CD4-positive, alpha-beta T cell (primary cell): ENCODE measurements at regions of chr19 and their contacts with region 1.

Region 1: GRCh38 chr19:17859533-17860330 is at the start of gene RPL18A:
- DNase-seq: peak; percentile 96 to 100 (median 99)
- ATAC-seq: peak; percentile 95
- H3K4me3 ChIP-seq: peak within 1 kb of the TSS; percentile 86
- H3K4me3 Mint-ChIP-seq: peak within 1 kb of the TSS; percentile 100
- H3K27ac ChIP-seq: peak within 1 kb of the TSS; percentile 1 to 71
- H3K27ac Mint-ChIP-seq: peak within 1 kb of the TSS; percentile 88
- H3K4me1 ChIP-seq: peaks cover 37% of the 10 kb centered on the region
- H3K4me1 Mint-ChIP-seq: peaks cover 33% of the 10 kb centered on the region
- H3K27me3 ChIP-seq: no peaks in the 10 kb centered on the region
- H3K27me3 Mint-ChIP-seq: no peaks in the 10 kb centered on the region
- CTCF ChIP-seq: peak; percentile 82
- total RNA-seq, gene RPL18A: 4,157 to 4,260 TPM

Region 2: GRCh38 chr19:17448131-17448967 is 411.4 kb before region 1 on chr19 and contains the start of gene TMEM221:
- CTCF ChIA-PET with region 1: no interaction called
- POLR2A ChIA-PET with region 1: no interaction called
- intact Hi-C with region 1: loop called in 1 of 2 experiments (anchors 10 kb)
- DNase-seq: peak in 13 of 14 experiments; percentile 26 to 82 (median 55)
- ATAC-seq: peak; percentile 88
- H3K4me3 ChIP-seq: peak within 1 kb of the TSS; percentile 31
- H3K4me3 Mint-ChIP-seq: peak within 1 kb of the TSS; percentile 1
- H3K27ac ChIP-seq: no peak within 1 kb of the TSS
- H3K27ac Mint-ChIP-seq: no peak within 1 kb of the TSS
- H3K4me1 ChIP-seq: peaks cover 17% of the 10 kb centered on the region
- H3K4me1 Mint-ChIP-seq: peaks cover 10% of the 10 kb centered on the region
- H3K27me3 ChIP-seq: peaks cover 0 to 6% of the 10 kb centered on the region in 2 experiments
- H3K27me3 Mint-ChIP-seq: peaks cover 37% of the 10 kb centered on the region
- CTCF ChIP-seq: peak; percentile 56
- total RNA-seq, gene TMEM221: not detected

Region 3: DNA sequence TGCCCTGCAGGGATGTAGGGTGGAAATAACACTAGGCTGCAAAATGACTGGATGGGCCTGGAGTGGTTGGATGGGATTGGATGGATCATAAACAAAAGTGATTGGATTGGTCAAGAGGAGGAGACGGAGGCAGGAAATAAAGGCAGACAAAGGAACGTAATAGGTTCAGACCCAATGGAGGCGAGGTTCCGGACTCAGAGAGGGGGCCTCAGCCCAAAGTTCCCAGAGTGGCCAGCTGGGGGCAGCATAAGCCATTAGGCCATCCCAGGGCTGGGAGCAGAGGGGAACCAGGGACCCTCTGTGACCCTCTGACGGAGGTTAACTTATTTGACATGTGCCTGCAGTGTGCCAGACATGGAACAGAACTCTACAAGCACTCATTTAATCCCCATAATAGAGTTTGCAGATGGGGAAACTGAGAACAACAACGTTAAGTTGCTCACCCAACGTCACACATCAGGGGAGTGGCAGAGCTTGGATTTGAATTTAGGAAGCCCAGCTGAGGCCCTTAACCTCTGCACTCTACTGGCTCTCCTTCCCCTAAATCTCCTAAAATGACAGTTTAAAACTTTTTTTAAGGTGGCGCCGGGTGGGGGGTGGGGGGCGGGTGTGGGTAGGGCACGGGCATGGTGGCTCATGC is 155.8 kb before region 1 on chr19:
- CTCF ChIA-PET with region 1: interaction called, 27 read pairs
- POLR2A ChIA-PET with region 1: interaction called, 6 read pairs
- intact Hi-C with region 1: loop called (anchors 1 kb)
- DNase-seq: peak; percentile 63 to 80 (median 66)
- ATAC-seq: peak; percentile 99
- H3K4me3 ChIP-seq: no peak overlapping the region
- H3K4me3 Mint-ChIP-seq: no peak overlapping the region
- H3K27ac ChIP-seq: no peak overlapping the region
- H3K27ac Mint-ChIP-seq: no peak overlapping the region
- H3K4me1 ChIP-seq: peaks cover 4% of the 10 kb centered on the region
- H3K4me1 Mint-ChIP-seq: peaks cover 4% of the 10 kb centered on the region
- H3K27me3 ChIP-seq: peaks cover 2 to 4% of the 10 kb centered on the region in 2 experiments
- H3K27me3 Mint-ChIP-seq: peaks cover 6% of the 10 kb centered on the region
- CTCF ChIP-seq: peak; percentile 93

Region 4: DNA sequence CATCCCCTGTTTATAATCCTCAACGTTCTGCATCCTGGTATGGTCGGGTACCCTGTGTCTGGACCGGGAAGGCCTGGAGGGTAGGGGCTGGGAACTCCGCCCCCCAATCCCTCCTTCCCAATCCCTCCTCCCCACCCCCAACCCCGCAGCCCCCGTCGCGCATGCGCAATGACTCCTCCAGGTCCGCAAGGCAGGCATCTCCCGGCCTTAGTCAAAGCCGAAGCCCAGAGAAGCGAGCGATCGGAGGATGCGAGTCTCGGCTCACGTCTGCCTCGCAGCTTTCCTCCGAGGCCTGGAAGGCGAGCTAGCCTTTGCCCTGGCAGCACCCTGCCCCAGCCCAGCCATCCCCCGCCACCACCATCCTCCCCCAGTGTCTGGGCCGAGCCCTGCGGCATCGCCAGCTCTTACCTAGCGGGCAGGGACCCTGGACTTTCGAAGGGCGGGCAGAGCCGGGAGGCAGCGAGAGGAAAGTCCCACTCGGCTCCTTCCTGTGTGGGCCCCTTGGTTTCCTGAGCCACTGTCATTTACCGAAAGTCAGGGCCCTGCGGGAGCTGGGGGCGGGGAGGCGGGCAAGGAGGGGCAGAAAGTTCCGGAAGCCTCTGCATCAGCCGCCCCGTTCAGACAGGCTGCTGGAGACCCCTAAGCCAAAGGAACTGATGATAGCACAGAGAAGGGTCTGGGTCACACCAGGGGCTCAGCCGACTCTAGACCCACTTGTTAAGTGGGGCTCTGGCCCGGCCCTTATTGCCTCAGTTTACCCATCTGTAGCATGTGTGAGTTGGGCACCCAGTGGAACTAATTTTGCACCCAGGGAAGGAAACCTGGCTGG is 12.0 kb before region 1 on chr19 and contains the start of gene JAK3:
- CTCF ChIA-PET with region 1: interaction called, 37 read pairs
- POLR2A ChIA-PET with region 1: interaction called, 75 read pairs
- intact Hi-C with region 1: no loop called
- DNase-seq: peak; percentile 67 to 93 (median 83)
- ATAC-seq: peak; percentile 81
- H3K4me3 ChIP-seq: peak within 1 kb of the TSS; percentile 65
- H3K4me3 Mint-ChIP-seq: peak within 1 kb of the TSS; percentile 99
- H3K27ac ChIP-seq: peak within 1 kb of the TSS; percentile 90 to 98
- H3K27ac Mint-ChIP-seq: peak within 1 kb of the TSS; percentile 94
- H3K4me1 ChIP-seq: peaks cover 85% of the 10 kb centered on the region
- H3K4me1 Mint-ChIP-seq: peaks cover 72% of the 10 kb centered on the region
- H3K27me3 ChIP-seq: no peaks in the 10 kb centered on the region
- H3K27me3 Mint-ChIP-seq: no peaks in the 10 kb centered on the region
- CTCF ChIP-seq: no peak
- total RNA-seq, gene JAK3: 120 to 121 TPM

Region 5: DNA sequence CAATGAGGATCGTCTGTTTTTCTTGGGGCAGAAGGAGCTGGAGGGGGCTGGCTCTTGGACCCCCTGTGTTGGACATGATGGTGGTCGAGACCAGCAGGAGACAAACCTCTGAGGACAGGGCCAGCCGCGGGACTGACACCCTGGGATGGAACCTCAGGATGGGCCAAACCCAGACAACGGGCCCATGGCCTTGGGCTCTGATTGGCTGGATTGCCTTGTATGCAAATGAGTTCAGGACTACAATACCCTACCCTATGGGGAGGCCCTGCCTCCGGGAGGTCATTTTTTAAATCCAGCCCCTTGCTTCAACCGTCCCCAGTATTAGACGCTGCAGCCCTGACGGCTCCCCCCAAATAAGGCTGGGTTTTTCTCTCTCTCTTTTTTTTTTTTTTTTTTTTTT is 34.0 kb after region 1 on chr19:
- CTCF ChIA-PET with region 1: no interaction called
- POLR2A ChIA-PET with region 1: no interaction called
- intact Hi-C with region 1: no loop called
- DNase-seq: no peak
- ATAC-seq: no peak
- H3K4me3 ChIP-seq: no peak overlapping the region
- H3K4me3 Mint-ChIP-seq: no peak overlapping the region
- H3K27ac ChIP-seq: no peak overlapping the region
- H3K27ac Mint-ChIP-seq: no peak overlapping the region
- H3K4me1 ChIP-seq: no peaks in the 10 kb centered on the region
- H3K4me1 Mint-ChIP-seq: no peaks in the 10 kb centered on the region
- H3K27me3 ChIP-seq: no peaks in the 10 kb centered on the region
- H3K27me3 Mint-ChIP-seq: peaks cover 4% of the 10 kb centered on the region
- CTCF ChIP-seq: no peak

Region 6: DNA sequence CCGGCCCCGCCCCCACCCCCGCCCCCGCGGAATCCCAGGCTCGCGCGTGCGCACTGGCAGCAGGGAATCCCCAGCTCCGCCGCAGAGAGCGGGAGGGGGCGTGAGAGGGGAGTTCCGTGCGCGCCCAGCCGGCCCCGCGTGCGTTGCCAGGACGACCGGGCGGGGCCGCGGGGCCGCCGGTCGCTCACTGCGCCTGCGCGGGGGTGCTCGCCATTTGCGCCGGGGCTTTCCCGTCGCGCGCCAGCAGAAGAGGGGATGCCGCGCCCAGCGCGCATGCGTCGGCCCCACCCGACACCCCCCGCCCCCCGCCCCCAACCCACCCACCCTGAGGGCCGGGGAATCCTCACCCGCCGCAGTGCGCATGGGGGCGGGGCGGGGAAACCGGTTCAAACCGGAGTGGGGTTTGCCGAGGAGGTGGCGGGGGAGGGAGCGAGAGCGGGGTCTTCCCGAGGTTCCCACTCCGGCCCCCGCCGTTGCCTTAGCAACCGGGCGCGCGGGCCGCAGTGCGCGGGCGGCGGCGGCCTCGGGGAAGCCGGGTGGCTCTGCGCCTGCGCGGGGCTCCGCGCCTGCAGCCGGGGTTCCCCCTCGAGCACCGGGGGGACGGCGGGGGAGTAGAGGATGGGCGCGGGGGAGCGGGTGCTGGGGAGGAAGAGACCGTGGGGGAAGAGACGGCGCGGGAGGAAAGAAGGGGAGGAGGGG is 88.2 kb after region 1 on chr19:
- CTCF ChIA-PET with region 1: interaction called, 5 read pairs
- POLR2A ChIA-PET with region 1: interaction called, 12 read pairs
- intact Hi-C with region 1: no loop called
- DNase-seq: peak; percentile 89 to 99 (median 94)
- ATAC-seq: peak; percentile 69
- H3K4me3 ChIP-seq: peak overlapping the region; percentile 57
- H3K4me3 Mint-ChIP-seq: peak overlapping the region; percentile 89
- H3K27ac ChIP-seq: no peak overlapping the region
- H3K27ac Mint-ChIP-seq: peak overlapping the region; percentile 93
- H3K4me1 ChIP-seq: peaks cover 58% of the 10 kb centered on the region
- H3K4me1 Mint-ChIP-seq: peaks cover 55% of the 10 kb centered on the region
- H3K27me3 ChIP-seq: peaks cover 36 to 46% of the 10 kb centered on the region in 2 experiments
- H3K27me3 Mint-ChIP-seq: peaks cover 44% of the 10 kb centered on the region
- CTCF ChIP-seq: no peak

Region 7: DNA sequence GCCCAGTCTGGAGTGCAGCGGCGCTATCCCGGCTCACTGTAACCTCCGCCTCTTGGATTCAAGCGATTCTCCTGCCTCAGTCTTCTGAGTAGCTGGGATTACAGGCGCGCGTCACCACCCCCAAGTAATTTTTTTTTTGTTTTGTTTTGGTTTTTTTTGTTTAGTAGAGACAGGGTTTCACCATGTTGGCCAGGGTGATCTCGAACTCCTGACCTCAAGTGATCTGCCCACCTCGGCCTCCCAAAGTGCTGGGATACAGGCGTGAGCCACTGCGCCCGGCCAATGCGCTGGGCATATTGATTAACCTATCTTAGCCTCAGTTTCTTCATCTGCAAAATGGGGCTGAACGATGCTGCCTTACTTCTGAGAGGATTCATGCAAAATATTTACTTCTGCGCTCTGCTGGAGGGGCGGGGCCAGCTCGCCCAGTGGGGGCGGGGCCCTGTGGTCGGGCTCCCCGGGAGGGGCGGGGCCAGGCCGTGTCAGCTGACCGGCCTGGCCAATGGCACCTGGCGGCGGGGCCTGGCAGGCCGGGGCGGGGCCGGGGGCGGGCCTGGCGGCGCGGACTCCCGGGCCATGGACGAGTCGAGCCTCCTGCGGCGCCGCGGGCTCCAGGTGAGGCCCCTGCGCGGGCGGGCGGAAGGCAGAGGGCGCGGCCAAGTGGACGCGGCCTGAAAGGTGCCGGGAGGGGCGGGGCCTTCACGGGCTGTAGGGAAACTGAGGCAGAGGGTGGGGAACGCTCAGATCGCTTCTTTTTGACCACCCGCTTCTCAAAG is 237.7 kb after region 1 on chr19 and contains the start of gene MAST3:
- CTCF ChIA-PET with region 1: no interaction called
- POLR2A ChIA-PET with region 1: no interaction called
- intact Hi-C with region 1: no loop called
- DNase-seq: peak; percentile 81 to 96 (median 93)
- ATAC-seq: peak; percentile 98
- H3K4me3 ChIP-seq: peak within 1 kb of the TSS; percentile 59
- H3K4me3 Mint-ChIP-seq: peak within 1 kb of the TSS; percentile 91
- H3K27ac ChIP-seq: peak within 1 kb of the TSS in 1 of 2 donors; percentile 53
- H3K27ac Mint-ChIP-seq: peak within 1 kb of the TSS; percentile 67
- H3K4me1 ChIP-seq: peaks cover 35% of the 10 kb centered on the region
- H3K4me1 Mint-ChIP-seq: peaks cover 32% of the 10 kb centered on the region
- H3K27me3 ChIP-seq: no peaks in the 10 kb centered on the region
- H3K27me3 Mint-ChIP-seq: no peaks in the 10 kb centered on the region
- CTCF ChIP-seq: no peak
- total RNA-seq, gene MAST3: 16.1 to 16.4 TPM

Region 8: DNA sequence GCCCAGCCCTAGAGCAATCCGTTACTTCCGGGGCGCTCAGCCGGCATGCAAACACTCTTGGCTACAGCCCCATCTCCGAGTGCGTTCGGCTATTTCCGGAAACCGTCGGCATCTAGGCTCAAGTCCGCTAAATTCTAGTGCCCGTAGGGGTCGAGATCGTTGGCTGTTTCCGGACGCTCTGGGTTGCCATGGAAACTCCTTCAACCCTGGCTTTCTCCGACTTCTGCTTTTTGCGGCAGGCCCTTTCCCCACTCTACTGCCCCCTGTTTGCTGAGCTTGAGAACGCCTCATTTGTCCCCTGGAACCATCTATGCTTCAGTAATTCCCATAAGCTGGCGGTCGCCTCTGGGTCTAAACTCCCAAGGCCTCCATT is 292.7 kb after region 1 on chr19:
- CTCF ChIA-PET with region 1: no interaction called
- POLR2A ChIA-PET with region 1: interaction called, 6 read pairs
- intact Hi-C with region 1: loop called in 1 of 2 experiments (anchors 1 kb)
- DNase-seq: peak; percentile 94 to 99 (median 98)
- ATAC-seq: peak; percentile 67
- H3K4me3 ChIP-seq: peak overlapping the region; percentile 78
- H3K4me3 Mint-ChIP-seq: peak overlapping the region; percentile 86
- H3K27ac ChIP-seq: peak overlapping the region; percentile 64 to 88
- H3K27ac Mint-ChIP-seq: peak overlapping the region; percentile 80
- H3K4me1 ChIP-seq: peaks cover 36% of the 10 kb centered on the region
- H3K4me1 Mint-ChIP-seq: peaks cover 23% of the 10 kb centered on the region
- H3K27me3 ChIP-seq: no peaks in the 10 kb centered on the region
- H3K27me3 Mint-ChIP-seq: no peaks in the 10 kb centered on the region
- CTCF ChIP-seq: peak; percentile 58

Region 9: GRCh38 chr19:18304458-18305310 is 445.0 kb after region 1 on chr19:
- CTCF ChIA-PET with region 1: no interaction called
- POLR2A ChIA-PET with region 1: no interaction called
- intact Hi-C with region 1: no loop called
- DNase-seq: peak; percentile 62 to 91 (median 81)
- ATAC-seq: peak; percentile 74
- H3K4me3 ChIP-seq: peak overlapping the region; percentile 63
- H3K4me3 Mint-ChIP-seq: peak overlapping the region; percentile 96
- H3K27ac ChIP-seq: peak overlapping the region; percentile 92 to 96
- H3K27ac Mint-ChIP-seq: peak overlapping the region; percentile 98
- H3K4me1 ChIP-seq: peaks cover 79% of the 10 kb centered on the region
- H3K4me1 Mint-ChIP-seq: peaks cover 47% of the 10 kb centered on the region
- H3K27me3 ChIP-seq: no peaks in the 10 kb centered on the region
- H3K27me3 Mint-ChIP-seq: no peaks in the 10 kb centered on the region
- CTCF ChIP-seq: no peak